CD8-positive, alpha-beta memory T cell (primary cell): ENCODE measurements at regions of chr15 and their contacts with region 1.

Region 1: GRCh38 chr15:67101911-67102598 is 36.7 kb downstream of the SMAD3 start:
- DNase-seq: peak in 3 of 5 donors; percentile 20 to 83 (median 72)
- H3K4me3 ChIP-seq: peak overlapping the region; percentile 37
- H3K4me3 Mint-ChIP-seq: no peak overlapping the region
- H3K27ac ChIP-seq: peak overlapping the region; percentile 47
- H3K27ac Mint-ChIP-seq: no peak overlapping the region
- H3K4me1 ChIP-seq: peaks cover 98% of the 10 kb centered on the region
- H3K4me1 Mint-ChIP-seq: peaks cover 27 to 65% (median 27%) of the 10 kb centered on the region in 3 donors
- H3K27me3 ChIP-seq: no peaks in the 10 kb centered on the region
- H3K27me3 Mint-ChIP-seq: no peaks in the 10 kb centered on the region

Region 2: GRCh38 chr15:66700802-66701421 is 401.1 kb before region 1 on chr15:
- CTCF ChIA-PET with region 1: no interaction called
- POLR2A ChIA-PET with region 1: no interaction called
- DNase-seq: peak; percentile 73 to 83 (median 81)
- H3K4me3 ChIP-seq: peak overlapping the region; percentile 84
- H3K4me3 Mint-ChIP-seq: peak overlapping the region; percentile 81 to 93 (median 90)
- H3K27ac ChIP-seq: peak overlapping the region; percentile 59
- H3K27ac Mint-ChIP-seq: peak overlapping the region in 2 of 8 donors; percentile 23 to 85
- H3K4me1 ChIP-seq: peaks cover 19% of the 10 kb centered on the region
- H3K4me1 Mint-ChIP-seq: peaks cover 19 to 30% (median 21%) of the 10 kb centered on the region in 3 donors
- H3K27me3 ChIP-seq: peaks cover 20% of the 10 kb centered on the region
- H3K27me3 Mint-ChIP-seq: peaks cover 18 to 31% of the 10 kb centered on the region in 2 donors

Region 3: GRCh38 chr15:67043939-67044771 is 57.9 kb before region 1 on chr15:
- CTCF ChIA-PET with region 1: no interaction called
- POLR2A ChIA-PET with region 1: no interaction called
- DNase-seq: no peak
- H3K4me3 ChIP-seq: no peak overlapping the region
- H3K4me3 Mint-ChIP-seq: no peak overlapping the region
- H3K27ac ChIP-seq: no peak overlapping the region
- H3K27ac Mint-ChIP-seq: no peak overlapping the region
- H3K4me1 ChIP-seq: peaks cover 17% of the 10 kb centered on the region
- H3K4me1 Mint-ChIP-seq: peaks cover 16 to 24% (median 22%) of the 10 kb centered on the region in 3 donors
- H3K27me3 ChIP-seq: no peaks in the 10 kb centered on the region
- H3K27me3 Mint-ChIP-seq: no peaks in the 10 kb centered on the region

Region 4: GRCh38 chr15:67065444-67066093 is 36.5 kb before region 1 on chr15 and contains the start of gene SMAD3:
- CTCF ChIA-PET with region 1: interaction called, 33 read pairs
- POLR2A ChIA-PET with region 1: interaction called, 7 read pairs
- DNase-seq: peak; percentile 47 to 82 (median 72)
- H3K4me3 ChIP-seq: peak within 1 kb of the TSS; percentile 93
- H3K4me3 Mint-ChIP-seq: peak within 1 kb of the TSS; percentile 94 to 99 (median 97)
- H3K27ac ChIP-seq: peak within 1 kb of the TSS; percentile 64
- H3K27ac Mint-ChIP-seq: peak within 1 kb of the TSS; percentile 62 to 96 (median 92)
- H3K4me1 ChIP-seq: peaks cover 47% of the 10 kb centered on the region
- H3K4me1 Mint-ChIP-seq: peaks cover 56 to 62% (median 59%) of the 10 kb centered on the region in 3 donors
- H3K27me3 ChIP-seq: no peaks in the 10 kb centered on the region
- H3K27me3 Mint-ChIP-seq: no peaks in the 10 kb centered on the region
- total RNA-seq, gene SMAD3: 30.2 to 34.2 TPM

Region 5: GRCh38 chr15:67080900-67081431 is 21.1 kb before region 1 on chr15:
- CTCF ChIA-PET with region 1: interaction called, 29 read pairs
- POLR2A ChIA-PET with region 1: interaction called, 9 read pairs
- DNase-seq: peak in 1 of 5 donors; percentile 60
- H3K4me3 ChIP-seq: no peak overlapping the region
- H3K4me3 Mint-ChIP-seq: peak overlapping the region; percentile 21 to 84 (median 64)
- H3K27ac ChIP-seq: no peak overlapping the region
- H3K27ac Mint-ChIP-seq: peak overlapping the region; percentile 89 to 96 (median 92)
- H3K4me1 ChIP-seq: peaks cover 91% of the 10 kb centered on the region
- H3K4me1 Mint-ChIP-seq: peaks cover 94 to 98% (median 97%) of the 10 kb centered on the region in 3 donors
- H3K27me3 ChIP-seq: no peaks in the 10 kb centered on the region
- H3K27me3 Mint-ChIP-seq: no peaks in the 10 kb centered on the region

Region 6: DNA sequence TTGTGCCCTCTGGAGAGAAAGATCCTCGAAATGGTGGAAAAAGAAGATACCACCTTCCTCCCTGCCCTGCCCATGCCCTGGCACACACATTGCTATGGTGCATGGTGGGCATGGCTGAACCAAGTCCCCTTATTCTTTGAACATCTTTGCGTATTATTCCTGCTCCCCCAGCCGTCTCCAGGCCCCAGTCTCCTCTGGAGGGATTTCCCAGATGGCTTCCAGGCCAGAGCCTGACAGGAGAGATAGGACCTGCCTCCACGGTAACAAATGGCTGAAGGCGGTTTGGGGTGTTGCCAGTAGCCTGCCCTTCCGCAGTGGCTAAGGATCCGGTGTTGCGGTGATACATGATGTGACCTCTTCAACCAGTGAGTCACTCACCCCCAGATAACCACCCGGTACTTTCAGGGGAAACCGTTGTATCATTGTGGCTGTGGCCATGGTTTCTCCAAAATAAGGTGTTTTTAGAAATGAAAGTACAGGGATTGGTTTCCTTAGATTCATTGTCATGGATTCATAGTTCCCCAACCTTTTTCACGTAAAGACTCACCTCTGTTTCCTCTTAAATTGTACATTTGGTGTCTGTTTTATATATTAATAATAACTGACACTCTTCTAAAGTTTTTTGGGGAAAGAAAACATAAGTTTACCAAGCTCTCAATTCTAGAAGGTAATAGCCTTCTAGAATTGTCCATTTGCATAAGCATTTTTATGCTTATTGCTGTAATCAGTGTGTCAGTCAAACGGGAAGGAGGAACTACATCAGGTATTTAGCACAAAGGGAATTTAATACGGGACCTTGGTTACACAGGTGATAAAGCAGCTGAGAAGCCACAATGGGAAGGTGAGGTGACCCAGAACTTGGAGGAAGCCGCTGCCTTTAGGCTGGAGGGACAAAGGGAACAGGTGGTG is 10.7 kb before region 1 on chr15:
- CTCF ChIA-PET with region 1: interaction called, 6 read pairs
- POLR2A ChIA-PET with region 1: interaction called, 19 read pairs
- DNase-seq: peak in 4 of 5 donors; percentile 54 to 89 (median 74)
- H3K4me3 ChIP-seq: peak overlapping the region; percentile 20
- H3K4me3 Mint-ChIP-seq: peak overlapping the region; percentile 79 to 86 (median 83)
- H3K27ac ChIP-seq: peak overlapping the region; percentile 72
- H3K27ac Mint-ChIP-seq: peak overlapping the region in 7 of 8 donors; percentile 92 to 97 (median 96)
- H3K4me1 ChIP-seq: peaks cover 85% of the 10 kb centered on the region
- H3K4me1 Mint-ChIP-seq: peaks cover 90 to 100% (median 92%) of the 10 kb centered on the region in 3 donors
- H3K27me3 ChIP-seq: no peaks in the 10 kb centered on the region
- H3K27me3 Mint-ChIP-seq: peaks cover 0 to 2% of the 10 kb centered on the region in 2 donors

Region 7: DNA sequence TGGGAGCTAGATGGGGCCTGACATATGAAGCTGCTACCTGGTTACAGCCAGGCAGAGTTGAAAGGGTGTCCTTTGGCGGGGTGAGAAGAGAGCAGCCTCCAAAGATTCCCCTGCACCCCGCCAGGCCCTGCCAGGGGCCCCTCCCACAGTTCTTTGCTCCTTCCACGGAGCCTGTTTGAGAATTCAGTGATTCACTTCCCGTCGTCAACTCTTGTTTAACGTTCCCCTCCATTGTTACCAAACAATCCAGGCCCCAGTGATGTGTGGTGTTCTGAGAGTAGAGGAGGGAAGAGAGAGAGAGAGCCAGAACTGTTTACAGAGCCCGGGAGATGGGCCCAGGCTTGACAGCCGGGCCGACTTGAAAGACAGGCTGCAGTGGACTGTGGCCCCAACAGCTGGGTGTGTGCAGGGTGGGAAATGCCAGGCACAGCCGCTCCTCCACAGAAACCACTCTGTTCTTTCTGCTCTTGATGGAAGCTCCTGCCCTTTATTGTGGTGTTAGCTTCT is 44.9 kb after region 1 on chr15:
- CTCF ChIA-PET with region 1: no interaction called
- POLR2A ChIA-PET with region 1: no interaction called
- DNase-seq: no peak
- H3K4me3 ChIP-seq: no peak overlapping the region
- H3K4me3 Mint-ChIP-seq: peak overlapping the region in 6 of 7 donors; percentile 21 to 62 (median 50)
- H3K27ac ChIP-seq: no peak overlapping the region
- H3K27ac Mint-ChIP-seq: peak overlapping the region in 7 of 8 donors; percentile 60 to 95 (median 87)
- H3K4me1 ChIP-seq: peaks cover 70% of the 10 kb centered on the region
- H3K4me1 Mint-ChIP-seq: peaks cover 87 to 96% (median 93%) of the 10 kb centered on the region in 3 donors
- H3K27me3 ChIP-seq: no peaks in the 10 kb centered on the region
- H3K27me3 Mint-ChIP-seq: peaks cover 0 to 2% of the 10 kb centered on the region in 2 donors

Region 8: DNA sequence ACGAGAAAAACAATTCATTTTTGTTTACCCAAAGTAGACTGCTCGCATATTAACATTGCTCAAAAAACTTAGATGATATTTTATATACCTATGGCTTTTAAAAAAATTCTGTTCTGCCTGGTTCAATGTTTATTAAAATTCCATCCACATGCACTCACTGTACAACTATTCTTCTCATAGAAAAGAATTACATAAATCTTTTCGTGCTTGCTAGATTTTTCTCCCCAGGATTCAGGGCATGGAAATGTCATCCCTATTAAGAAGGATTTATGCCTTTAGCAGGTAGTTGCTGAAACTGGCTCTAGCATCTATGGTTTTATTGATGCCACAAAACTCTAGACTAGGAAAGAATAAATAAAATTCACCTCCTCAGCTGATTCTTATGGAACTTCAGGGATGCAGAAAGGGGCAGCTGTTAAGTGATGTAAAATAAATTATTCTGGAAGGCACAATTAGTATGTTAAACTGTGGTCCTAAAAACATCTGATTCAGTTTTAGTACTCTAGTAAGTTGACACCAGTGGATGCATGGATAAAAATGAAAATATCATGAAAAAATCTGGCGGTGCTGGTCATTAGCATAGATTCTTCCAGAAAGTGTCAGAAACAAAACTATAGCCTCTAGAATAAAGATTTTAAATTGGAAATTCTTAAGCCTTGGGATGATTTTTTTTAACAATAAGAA is 110.8 kb after region 1 on chr15:
- CTCF ChIA-PET with region 1: no interaction called
- POLR2A ChIA-PET with region 1: no interaction called
- DNase-seq: no peak
- H3K4me3 ChIP-seq: no peak overlapping the region
- H3K4me3 Mint-ChIP-seq: no peak overlapping the region
- H3K27ac ChIP-seq: no peak overlapping the region
- H3K27ac Mint-ChIP-seq: no peak overlapping the region
- H3K4me1 ChIP-seq: no peaks in the 10 kb centered on the region
- H3K4me1 Mint-ChIP-seq: peaks cover 0 to 4% (median 0%) of the 10 kb centered on the region in 3 donors
- H3K27me3 ChIP-seq: no peaks in the 10 kb centered on the region
- H3K27me3 Mint-ChIP-seq: no peaks in the 10 kb centered on the region